Activated CD4-positive, alpha-beta T cell treated with anti-CD3 and anti-CD28 coated beads, Interleukin-2, amount 10 ng/mL, durations not matched to agents 24 days and 14 days (primary cell): ENCODE measurements at regions of chr15 and their contacts with region 1.

Region 1: DNA sequence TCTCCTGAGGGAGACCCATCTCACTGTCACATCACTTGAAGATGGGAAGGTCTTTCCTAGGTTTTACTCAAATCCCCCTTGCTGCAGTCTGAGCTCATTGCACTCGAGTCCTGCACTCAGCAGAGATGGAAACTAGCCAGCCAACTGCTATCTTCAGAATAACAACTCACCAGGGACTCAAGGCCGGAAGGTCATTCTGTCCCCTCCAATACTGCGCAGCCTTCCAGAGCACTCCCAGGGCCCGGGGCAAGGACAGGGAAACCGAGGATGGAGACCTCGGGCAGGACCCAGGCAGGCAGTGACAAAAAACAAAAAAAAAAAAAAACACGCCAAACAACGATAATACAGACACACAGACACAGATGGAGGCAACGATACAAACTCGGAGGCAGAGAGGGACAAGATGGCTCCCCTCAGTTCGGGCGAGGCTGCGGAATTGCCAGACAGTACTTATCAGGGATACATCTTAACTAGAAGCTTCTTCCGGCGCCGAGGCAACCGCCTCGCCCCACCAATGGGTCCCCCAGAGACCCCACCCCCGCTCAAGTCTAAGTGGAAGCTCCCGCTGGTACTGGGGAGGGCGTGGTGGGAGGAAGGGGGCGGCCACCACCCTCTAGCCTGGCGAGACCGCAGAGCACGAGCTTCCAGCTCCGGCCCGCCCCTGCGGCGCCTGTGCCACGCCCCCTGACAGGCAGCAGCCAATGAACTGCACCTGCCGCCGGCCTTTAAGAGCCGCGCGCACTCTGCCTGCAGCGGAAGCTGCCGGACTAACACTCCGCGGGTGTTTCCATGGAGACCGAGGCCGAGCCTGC is 7.0 kb upstream of the MAP1A start:
- DNase-seq: peak; percentile 99
- H3K4me3 Mint-ChIP-seq: peak overlapping the region; percentile 89
- H3K27ac Mint-ChIP-seq: peak overlapping the region; percentile 89
- H3K4me1 Mint-ChIP-seq: peaks cover 48% of the 10 kb centered on the region
- H3K27me3 Mint-ChIP-seq: no peaks in the 10 kb centered on the region

Region 2: GRCh38 chr15:42759093-42759492 is 751.3 kb before region 1 on chr15:
- intact Hi-C with region 1: no loop called
- DNase-seq: no peak
- H3K4me3 Mint-ChIP-seq: no peak overlapping the region
- H3K27ac Mint-ChIP-seq: no peak overlapping the region
- H3K4me1 Mint-ChIP-seq: no peaks in the 10 kb centered on the region
- H3K27me3 Mint-ChIP-seq: no peaks in the 10 kb centered on the region

Region 3: DNA sequence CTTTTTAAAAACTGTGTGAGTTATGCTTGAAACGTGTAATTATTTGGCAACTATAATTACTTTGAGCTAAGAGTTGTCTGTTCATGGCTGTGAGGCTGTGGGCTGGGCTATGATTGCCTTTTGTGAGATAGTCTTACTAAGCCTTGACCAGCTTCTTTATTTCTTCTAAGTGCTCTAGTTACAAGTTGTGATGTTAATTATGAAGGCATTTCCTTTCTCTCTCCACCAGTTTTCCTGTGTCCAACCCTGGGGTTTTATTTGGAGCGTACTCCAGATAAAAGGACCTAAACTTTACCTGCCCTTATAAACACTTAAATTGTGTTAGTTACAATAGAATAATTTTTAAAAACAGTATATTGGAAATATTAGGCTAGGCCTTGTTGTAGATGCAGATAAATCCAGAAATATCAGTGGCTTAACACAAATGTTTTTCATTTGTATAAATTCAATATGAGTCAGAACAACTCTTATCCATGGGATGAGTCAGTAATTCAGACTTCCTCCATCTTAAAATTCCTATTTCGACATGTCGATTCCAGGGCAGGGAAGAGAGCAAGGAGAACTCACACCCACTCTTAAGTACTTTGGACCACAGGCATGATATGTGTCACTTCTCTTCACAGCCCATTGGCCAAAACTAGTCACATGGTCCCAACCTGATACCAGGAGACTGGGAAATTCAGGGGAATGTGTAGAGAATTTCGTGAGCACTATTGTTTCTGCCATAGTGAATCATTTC is 360.0 kb before region 1 on chr15:
- intact Hi-C with region 1: no loop called
- DNase-seq: no peak
- H3K4me3 Mint-ChIP-seq: no peak overlapping the region
- H3K27ac Mint-ChIP-seq: no peak overlapping the region
- H3K4me1 Mint-ChIP-seq: peaks cover 14% of the 10 kb centered on the region
- H3K27me3 Mint-ChIP-seq: no peaks in the 10 kb centered on the region

Region 4: DNA sequence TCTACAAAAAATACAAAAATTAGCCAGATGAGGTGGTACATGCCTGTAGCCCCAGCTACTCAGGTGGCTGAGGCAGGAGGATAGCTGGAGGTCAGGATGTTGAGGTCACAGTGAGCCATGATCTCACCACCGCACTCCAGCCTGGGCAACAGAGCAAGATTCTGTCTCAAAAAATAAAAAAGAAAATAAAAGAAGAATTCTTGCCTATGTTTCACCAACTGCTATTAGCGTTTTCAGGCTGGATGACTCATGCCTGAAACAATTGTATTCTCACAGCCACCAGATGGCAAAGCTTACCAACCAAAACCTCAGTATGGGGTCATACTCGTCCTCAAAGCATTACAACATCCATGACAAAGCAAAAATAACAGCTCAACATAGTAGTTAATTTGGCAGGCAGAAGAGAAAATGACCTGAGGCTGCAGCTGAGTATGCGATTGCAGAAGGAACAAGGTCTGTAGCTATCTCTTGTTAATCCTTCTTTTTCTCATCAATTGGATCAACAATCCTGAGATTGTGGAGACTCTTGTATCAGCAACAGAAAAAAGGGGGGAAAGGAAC is 69.6 kb before region 1 on chr15:
- intact Hi-C with region 1: loop called (anchors 1 kb)
- DNase-seq: peak; percentile 82
- H3K4me3 Mint-ChIP-seq: peak overlapping the region; percentile 25
- H3K27ac Mint-ChIP-seq: peak overlapping the region; percentile 90
- H3K4me1 Mint-ChIP-seq: peaks cover 7% of the 10 kb centered on the region
- H3K27me3 Mint-ChIP-seq: no peaks in the 10 kb centered on the region

Region 5: DNA sequence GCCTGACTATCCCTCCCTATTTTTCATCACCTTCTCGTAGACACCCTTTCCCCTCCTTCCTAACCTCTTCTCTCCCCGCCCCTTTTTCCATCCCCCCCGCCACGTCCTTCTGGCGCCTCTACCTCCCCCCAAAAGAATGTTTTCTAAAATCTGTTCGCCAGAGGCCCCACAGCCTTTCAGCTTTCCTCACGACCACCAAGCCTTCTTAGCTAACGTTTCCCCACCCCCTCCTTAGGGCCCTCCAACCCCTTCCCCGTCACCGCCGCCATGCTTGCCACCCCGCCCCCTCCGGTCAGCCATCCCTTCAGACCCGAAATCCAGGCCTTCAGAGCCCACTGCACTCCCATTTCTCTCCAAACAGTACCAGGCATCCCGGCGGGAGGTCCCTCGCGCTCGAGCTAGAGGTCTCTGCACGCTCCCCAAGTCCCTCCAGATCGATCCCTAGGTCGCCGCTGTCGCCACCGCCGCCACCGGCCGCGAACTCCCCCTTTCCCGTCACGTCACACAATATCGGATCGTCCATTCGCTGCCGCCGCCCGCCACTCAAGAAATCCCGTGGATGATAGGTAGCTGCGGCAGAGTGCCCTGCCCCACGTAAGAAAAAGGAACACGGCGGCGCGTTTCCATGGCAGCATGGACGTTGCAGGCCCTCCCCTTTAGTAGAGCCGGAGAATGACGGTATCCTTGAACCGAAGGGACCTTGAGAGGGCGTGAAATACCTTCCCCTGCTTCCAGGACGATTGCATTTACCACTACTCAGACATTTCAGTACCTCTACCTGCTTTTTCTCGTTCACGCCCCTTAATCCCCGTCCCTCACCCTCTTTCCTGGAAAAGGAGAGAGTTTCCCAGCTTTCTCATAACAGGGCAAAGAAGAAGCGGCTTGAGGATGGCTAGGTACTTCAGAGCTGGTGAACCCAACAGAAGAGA is 17.5 kb before region 1 on chr15 and contains the start of gene TP53BP1:
- intact Hi-C with region 1: loop called (anchors 1 kb)
- DNase-seq: peak; percentile 98
- H3K4me3 Mint-ChIP-seq: peak within 1 kb of the TSS; percentile 91
- H3K27ac Mint-ChIP-seq: peak within 1 kb of the TSS; percentile 98
- H3K4me1 Mint-ChIP-seq: peaks cover 26% of the 10 kb centered on the region
- H3K27me3 Mint-ChIP-seq: no peaks in the 10 kb centered on the region
- total RNA-seq, gene TP53BP1: 38.7 and 40.0 TPM in 2 replicates